Natural killer cell (primary cell): ENCODE measurements at regions of chr20 and their contacts with region 1.

Region 1: DNA sequence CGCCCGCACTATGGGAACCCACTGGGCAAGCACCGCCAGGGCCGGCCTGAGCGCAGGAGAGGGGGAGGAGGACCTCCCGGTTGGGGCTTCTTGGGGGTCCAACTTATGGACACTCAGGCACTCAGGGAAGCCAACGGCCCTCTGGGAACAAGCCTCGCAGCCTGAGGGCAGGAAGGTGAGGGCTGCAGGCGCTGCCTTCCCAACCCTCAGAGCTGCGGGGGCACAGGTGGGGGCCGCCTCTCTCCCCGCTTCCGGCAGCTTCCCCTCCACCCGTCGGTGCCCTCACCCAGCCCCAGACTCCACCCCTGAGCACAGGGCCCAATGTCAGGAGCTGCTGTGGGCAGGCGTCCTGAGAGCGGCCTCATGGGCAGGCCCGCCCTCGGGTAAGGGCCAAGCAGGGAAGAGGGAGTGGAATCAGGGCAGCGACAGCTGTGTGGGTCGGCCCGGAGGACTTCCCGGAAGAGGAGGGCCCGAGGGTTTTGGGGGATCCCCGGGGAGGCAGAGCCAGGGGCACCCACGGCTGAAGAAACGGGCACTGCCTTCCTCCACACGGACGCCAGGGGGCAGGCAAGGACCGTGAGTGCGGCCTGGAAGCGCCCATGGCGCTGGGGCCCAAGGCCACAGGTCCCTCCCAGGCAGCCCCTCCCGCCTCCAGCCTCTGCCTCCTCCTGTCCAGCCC is 488 bp upstream of the PTK6 start:
- DNase-seq: peak; percentile 95 to 98
- ATAC-seq: peak; percentile 93 to 97 (median 93)
- H3K4me3 ChIP-seq: peak overlapping the region; percentile 42
- H3K4me3 Mint-ChIP-seq: peak overlapping the region; percentile 80
- H3K27ac ChIP-seq: peak overlapping the region; percentile 88
- H3K27ac Mint-ChIP-seq: peak overlapping the region; percentile 77 to 91
- H3K4me1 ChIP-seq: peaks cover 32% of the 10 kb centered on the region
- H3K4me1 Mint-ChIP-seq: peaks cover 0 to 20% of the 10 kb centered on the region in 2 donors
- H3K27me3 ChIP-seq: no peaks in the 10 kb centered on the region
- H3K27me3 Mint-ChIP-seq: no peaks in the 10 kb centered on the region
- CTCF ChIP-seq: peak; percentile 99

Region 2: GRCh38 chr20:63089051-63089891 is 448.4 kb before region 1 on chr20:
- intact Hi-C with region 1: no loop called
- DNase-seq: no peak
- ATAC-seq: no peak
- H3K4me3 ChIP-seq: no peak overlapping the region
- H3K4me3 Mint-ChIP-seq: no peak overlapping the region
- H3K27ac ChIP-seq: no peak overlapping the region
- H3K27ac Mint-ChIP-seq: no peak overlapping the region
- H3K4me1 ChIP-seq: no peaks in the 10 kb centered on the region
- H3K4me1 Mint-ChIP-seq: no peaks in the 10 kb centered on the region
- H3K27me3 ChIP-seq: no peaks in the 10 kb centered on the region
- H3K27me3 Mint-ChIP-seq: peaks cover 0 to 9% of the 10 kb centered on the region in 2 donors
- CTCF ChIP-seq: no peak

Region 3: DNA sequence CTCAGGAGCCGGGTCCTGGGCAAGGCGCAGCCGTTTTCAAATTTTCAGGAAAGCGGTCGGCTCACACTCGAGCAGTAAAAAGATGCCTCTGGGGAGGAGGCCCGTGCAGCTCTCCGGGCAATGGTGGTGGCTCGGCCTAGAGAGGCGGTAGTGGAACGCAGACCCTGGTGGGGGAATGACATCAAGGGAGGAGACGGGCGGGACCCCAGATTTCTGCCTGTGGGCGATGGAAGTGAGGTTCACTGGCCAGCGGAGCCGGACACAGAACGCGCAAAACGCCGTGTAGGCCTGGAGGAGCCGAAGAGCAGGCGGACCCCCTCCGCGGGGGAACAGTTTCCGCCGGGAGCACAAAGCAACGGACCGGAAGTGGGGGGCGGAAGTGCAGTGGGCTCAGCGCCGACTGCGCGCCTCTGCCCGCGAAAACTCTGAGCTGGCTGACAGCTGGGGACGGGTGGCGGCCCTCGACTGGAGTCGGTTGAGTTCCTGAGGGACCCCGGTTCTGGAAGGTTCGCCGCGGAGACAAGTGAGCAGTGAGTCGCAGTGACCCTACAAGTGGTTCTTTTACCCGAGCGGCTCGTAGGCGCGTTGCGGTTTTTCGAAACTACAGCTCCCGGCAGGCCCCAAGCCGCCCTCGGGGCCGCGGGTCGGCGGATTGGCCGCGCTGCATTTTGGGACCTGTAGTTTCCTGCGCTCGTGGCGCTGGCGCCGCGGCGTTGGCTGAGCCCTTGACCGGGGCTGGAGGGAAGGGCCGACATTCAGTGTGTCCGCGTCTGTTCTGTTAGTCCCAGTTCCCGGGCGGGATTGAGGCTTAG is 120.5 kb after region 1 on chr20 and contains the start of gene RTEL1:
- intact Hi-C with region 1: loop called (anchors 5 kb)
- DNase-seq: peak; percentile 92 to 94
- ATAC-seq: peak; percentile 89 to 92 (median 89)
- H3K4me3 ChIP-seq: peak within 1 kb of the TSS; percentile 76
- H3K4me3 Mint-ChIP-seq: peak within 1 kb of the TSS; percentile 97
- H3K27ac ChIP-seq: peak within 1 kb of the TSS; percentile 61
- H3K27ac Mint-ChIP-seq: peak within 1 kb of the TSS; percentile 92 to 95
- H3K4me1 ChIP-seq: peaks cover 36% of the 10 kb centered on the region
- H3K4me1 Mint-ChIP-seq: peaks cover 22 to 31% of the 10 kb centered on the region in 2 donors
- H3K27me3 ChIP-seq: peaks cover 12% of the 10 kb centered on the region
- H3K27me3 Mint-ChIP-seq: peaks cover 0 to 7% of the 10 kb centered on the region in 2 donors
- CTCF ChIP-seq: no peak
- total RNA-seq, gene RTEL1: 36.3 to 52.0 (median 40.4) TPM

Region 4: DNA sequence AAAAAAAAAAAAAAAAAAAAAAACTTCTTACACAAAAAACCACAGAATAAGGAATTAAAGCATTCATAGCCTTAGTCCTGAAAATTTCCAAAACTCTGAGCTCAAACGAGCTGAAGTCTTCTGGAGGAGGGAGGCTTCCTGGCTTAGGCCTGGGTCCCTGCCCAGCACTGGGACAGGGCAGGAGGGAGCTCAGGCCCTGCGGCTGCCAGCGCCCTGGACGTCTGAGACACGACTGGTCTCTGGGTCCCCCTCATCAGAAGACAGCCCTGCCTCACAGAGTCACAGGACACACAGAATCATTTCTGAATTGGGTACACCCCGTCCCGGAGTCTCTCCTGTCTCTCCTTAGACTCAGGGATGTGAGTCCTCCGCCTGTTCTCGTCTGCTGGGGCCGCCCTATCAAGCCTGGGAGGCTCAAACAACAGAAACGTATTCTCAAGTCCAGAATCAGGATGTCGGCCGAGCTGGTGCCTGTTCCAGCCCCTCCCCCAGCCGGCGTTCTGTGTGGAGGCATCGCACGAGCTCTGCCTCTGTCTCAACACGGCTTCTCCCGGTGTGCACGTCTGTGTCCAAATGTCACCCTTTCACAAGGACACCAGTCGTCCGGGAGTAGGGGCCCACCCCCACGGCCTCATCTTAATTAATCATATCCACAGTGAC is 254.0 kb after region 1 on chr20:
- intact Hi-C with region 1: loop called (anchors 2 kb)
- DNase-seq: no peak
- ATAC-seq: no peak
- H3K4me3 ChIP-seq: no peak overlapping the region
- H3K4me3 Mint-ChIP-seq: no peak overlapping the region
- H3K27ac ChIP-seq: no peak overlapping the region
- H3K27ac Mint-ChIP-seq: no peak overlapping the region
- H3K4me1 ChIP-seq: peaks cover 3% of the 10 kb centered on the region
- H3K4me1 Mint-ChIP-seq: no peaks in the 10 kb centered on the region
- H3K27me3 ChIP-seq: no peaks in the 10 kb centered on the region
- H3K27me3 Mint-ChIP-seq: peaks cover 0 to 3% of the 10 kb centered on the region in 2 donors
- CTCF ChIP-seq: no peak

Region 5: DNA sequence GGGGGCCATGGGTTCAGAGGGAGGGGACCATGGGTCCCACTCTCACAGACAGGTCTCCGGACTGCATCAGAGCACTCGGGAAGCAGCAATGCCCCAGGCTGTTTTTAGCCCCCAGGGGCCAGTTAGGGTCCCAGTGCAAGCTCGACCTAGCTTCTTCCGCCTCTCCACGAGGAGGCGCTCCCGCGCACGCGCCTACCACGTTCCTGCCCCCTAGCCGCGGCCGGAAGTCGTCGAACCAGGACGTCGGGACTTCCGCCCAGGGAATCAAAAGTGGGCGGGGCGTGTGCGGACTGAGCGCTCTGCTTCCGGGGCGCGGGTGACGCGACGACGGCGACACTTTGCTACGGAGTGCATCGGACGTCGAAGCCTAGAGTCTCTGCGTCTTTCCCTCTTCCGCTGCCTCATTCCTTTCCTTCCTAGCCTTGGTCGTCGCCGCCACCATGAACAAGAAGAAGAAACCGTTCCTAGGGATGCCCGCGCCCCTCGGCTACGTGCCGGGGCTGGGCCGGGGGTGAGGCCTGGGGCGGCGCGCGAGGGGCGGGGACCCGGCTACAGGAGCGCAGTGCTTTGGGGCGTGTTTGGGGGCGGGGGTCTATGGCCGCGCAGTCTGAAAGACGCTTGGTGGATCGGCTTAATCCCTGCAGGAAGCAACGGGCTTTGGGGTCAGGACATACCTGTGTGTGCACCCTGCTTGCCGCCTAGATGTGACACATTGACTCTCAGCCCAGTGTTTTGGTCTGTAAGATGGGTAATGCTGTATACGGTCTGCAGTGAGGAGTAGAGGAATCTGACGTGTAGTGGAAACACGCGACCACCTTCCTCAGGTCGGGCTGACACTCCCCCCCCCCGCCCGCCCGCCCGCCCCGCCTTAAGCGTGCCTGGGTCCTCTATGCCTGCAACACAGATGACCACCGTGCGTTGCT is 443.4 kb after region 1 on chr20 and contains the start of gene PRPF6:
- intact Hi-C with region 1: loop called (anchors 5 kb)
- DNase-seq: peak; percentile 92 to 99
- ATAC-seq: peak; percentile 61 to 86 (median 77)
- H3K4me3 ChIP-seq: peak within 1 kb of the TSS; percentile 62
- H3K4me3 Mint-ChIP-seq: peak within 1 kb of the TSS; percentile 95
- H3K27ac ChIP-seq: peak within 1 kb of the TSS; percentile 78
- H3K27ac Mint-ChIP-seq: peak within 1 kb of the TSS; percentile 88 to 95
- H3K4me1 ChIP-seq: peaks cover 54% of the 10 kb centered on the region
- H3K4me1 Mint-ChIP-seq: peaks cover 59 to 67% of the 10 kb centered on the region in 2 donors
- H3K27me3 ChIP-seq: no peaks in the 10 kb centered on the region
- H3K27me3 Mint-ChIP-seq: no peaks in the 10 kb centered on the region
- CTCF ChIP-seq: peak; percentile 90
- total RNA-seq, gene PRPF6: 52.7 to 63.0 (median 55.0) TPM